A549 (cell line): ENCODE measurements at regions of chr3 and their contacts with region 1.

Region 1: GRCh38 chr3:42247576-42248027 is 18.4 kb downstream of the CCK start:
- DNase-seq: peak; percentile 18 to 25
- ATAC-seq: peak; percentile 59 to 76; a peak in 5 of 6 replicates
- H3K4me3 ChIP-seq: no peak overlapping the region
- H3K27ac ChIP-seq: no peak overlapping the region
- H3K4me1 ChIP-seq: no peaks in the 10 kb centered on the region
- CTCF ChIP-seq: peak; percentile 64
- EP300 ChIP-seq: no peak
- POLR2A ChIP-seq: no peak
- RAD21 ChIP-seq: peak; percentile 65 to 69

Region 2: DNA sequence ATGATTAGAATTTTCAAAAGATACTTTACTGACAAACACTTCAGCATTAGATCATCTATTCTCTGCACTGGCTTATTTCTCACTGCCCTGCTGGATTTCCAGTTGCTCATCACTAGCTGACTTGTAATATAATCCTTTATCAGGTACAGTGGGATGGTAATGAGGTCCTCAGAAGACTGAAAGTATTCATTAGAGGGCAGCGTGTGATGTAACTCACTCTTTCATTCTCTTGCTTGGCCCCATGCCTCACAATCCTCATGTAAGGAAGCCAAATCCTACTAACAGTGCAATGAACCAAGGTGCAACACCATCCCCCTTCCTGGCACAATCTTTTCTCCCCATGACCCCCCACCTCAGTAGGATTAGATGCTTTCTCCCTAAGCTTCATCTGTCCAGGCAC is 758.4 kb before region 1 on chr3:
- CTCF ChIA-PET with region 1: no interaction called
- POLR2A ChIA-PET with region 1: no interaction called
- DNase-seq: no peak
- ATAC-seq: no peak
- H3K4me3 ChIP-seq: no peak overlapping the region
- H3K27ac ChIP-seq: no peak overlapping the region
- H3K4me1 ChIP-seq: no peaks in the 10 kb centered on the region
- CTCF ChIP-seq: no peak
- EP300 ChIP-seq: no peak
- POLR2A ChIP-seq: no peak
- RAD21 ChIP-seq: no peak

Region 3: GRCh38 chr3:42229942-42230688 is 17.5 kb before region 1 on chr3:
- CTCF ChIA-PET with region 1: interaction called, 13 read pairs
- POLR2A ChIA-PET with region 1: no interaction called
- DNase-seq: peak; percentile 52 to 57
- ATAC-seq: peak; percentile 62 to 85; a peak in 5 of 6 replicates
- H3K4me3 ChIP-seq: no peak overlapping the region
- H3K27ac ChIP-seq: peak overlapping the region; percentile 33 to 49; a peak in 2 of 6 replicates
- H3K4me1 ChIP-seq: 0 out of 3 replicates have a peak, but pooled peaks cover 3% of the 10 kb centered on the region
- CTCF ChIP-seq: peak; percentile 77
- EP300 ChIP-seq: no peak
- POLR2A ChIP-seq: no peak
- RAD21 ChIP-seq: peak; percentile 82

Region 4: GRCh38 chr3:42264399-42265058 is 16.9 kb after region 1 on chr3:
- CTCF ChIA-PET with region 1: interaction called, 19 read pairs
- POLR2A ChIA-PET with region 1: no interaction called
- DNase-seq: peak; percentile 13 to 46
- ATAC-seq: peak; percentile 43 to 80; a peak in 4 of 6 replicates
- H3K4me3 ChIP-seq: no peak overlapping the region
- H3K27ac ChIP-seq: no peak overlapping the region
- H3K4me1 ChIP-seq: peaks cover 13% of the 10 kb centered on the region; the same call in 2 of the 3 replicates
- CTCF ChIP-seq: no peak
- EP300 ChIP-seq: no peak
- POLR2A ChIP-seq: no peak
- RAD21 ChIP-seq: no peak

Region 5: DNA sequence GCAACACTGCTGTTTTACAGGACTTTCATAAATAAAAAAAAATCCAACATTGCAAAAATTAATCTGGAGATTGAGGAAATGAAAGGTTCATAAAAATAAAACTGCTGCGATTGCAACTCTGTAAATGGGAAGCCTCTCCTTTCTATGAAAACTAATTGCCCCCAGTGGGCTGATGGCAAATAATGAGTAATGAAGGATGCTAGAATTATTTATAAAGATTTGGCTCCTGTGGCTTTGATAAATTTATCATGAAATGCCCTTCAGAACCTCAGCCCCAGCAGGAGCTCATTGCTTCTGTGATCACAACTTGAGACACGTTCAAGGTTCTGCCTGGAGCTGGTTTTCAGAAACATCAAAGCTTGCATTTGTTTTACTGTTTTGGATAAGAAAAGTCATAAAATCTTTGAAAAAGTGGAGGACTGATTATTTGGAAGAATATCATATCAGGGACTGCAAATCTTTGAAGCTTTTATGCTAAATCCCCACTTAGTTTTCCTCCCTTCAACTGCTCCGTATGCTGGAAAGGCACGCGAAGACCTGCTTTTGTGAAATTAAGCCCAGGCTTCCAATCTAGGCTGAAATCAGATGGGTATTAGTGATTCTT is 187.3 kb after region 1 on chr3:
- CTCF ChIA-PET with region 1: interaction called, 12 read pairs
- POLR2A ChIA-PET with region 1: no interaction called
- DNase-seq: no peak
- ATAC-seq: no peak
- H3K4me3 ChIP-seq: no peak overlapping the region
- H3K27ac ChIP-seq: no peak overlapping the region
- H3K4me1 ChIP-seq: no peaks in the 10 kb centered on the region
- CTCF ChIP-seq: no peak
- EP300 ChIP-seq: no peak
- POLR2A ChIP-seq: no peak
- RAD21 ChIP-seq: no peak

Region 6: GRCh38 chr3:42443819-42444436 is 196.3 kb after region 1 on chr3:
- CTCF ChIA-PET with region 1: interaction called, 63 read pairs
- POLR2A ChIA-PET with region 1: no interaction called
- DNase-seq: peak; percentile 60 to 76
- ATAC-seq: peak; percentile 97 to 99
- H3K4me3 ChIP-seq: no peak overlapping the region
- H3K27ac ChIP-seq: no peak overlapping the region
- H3K4me1 ChIP-seq: no peaks in the 10 kb centered on the region
- CTCF ChIP-seq: peak; percentile 74
- EP300 ChIP-seq: no peak
- POLR2A ChIP-seq: no peak
- RAD21 ChIP-seq: peak; percentile 83 to 91

Region 7: GRCh38 chr3:42539869-42540714 is 292.5 kb after region 1 on chr3:
- CTCF ChIA-PET with region 1: interaction called, 11 read pairs
- POLR2A ChIA-PET with region 1: no interaction called
- DNase-seq: peak; percentile 44 to 53
- ATAC-seq: peak; percentile 49 to 85; a peak in 3 of 6 replicates
- H3K4me3 ChIP-seq: no peak overlapping the region
- H3K27ac ChIP-seq: no peak overlapping the region; a peak in 1 of 6 replicates
- H3K4me1 ChIP-seq: peaks cover 5% of the 10 kb centered on the region; the same call in 2 of the 3 replicates
- CTCF ChIP-seq: peak; percentile 49
- EP300 ChIP-seq: no peak
- POLR2A ChIP-seq: no peak
- RAD21 ChIP-seq: peak; percentile 28 to 29; a peak in 2 of 5 replicates

Region 8: GRCh38 chr3:42547401-42547945 is 299.9 kb after region 1 on chr3:
- CTCF ChIA-PET with region 1: interaction called, 19 read pairs
- POLR2A ChIA-PET with region 1: no interaction called
- DNase-seq: peak; percentile 47 to 55
- ATAC-seq: peak; percentile 78 to 90; a peak in 5 of 6 replicates
- H3K4me3 ChIP-seq: no peak overlapping the region
- H3K27ac ChIP-seq: peak overlapping the region in 1 of 2 experiments; percentile 25; a peak in 1 of 6 replicates
- H3K4me1 ChIP-seq: peaks cover 13% of the 10 kb centered on the region; the same call in 2 of the 3 replicates
- CTCF ChIP-seq: peak; percentile 77
- EP300 ChIP-seq: no peak
- POLR2A ChIP-seq: no peak
- RAD21 ChIP-seq: peak; percentile 27 to 38; a peak in 3 of 5 replicates